T-cell (primary cell): ENCODE measurements at regions of chr5 and their contacts with region 1.

Region 1: DNA sequence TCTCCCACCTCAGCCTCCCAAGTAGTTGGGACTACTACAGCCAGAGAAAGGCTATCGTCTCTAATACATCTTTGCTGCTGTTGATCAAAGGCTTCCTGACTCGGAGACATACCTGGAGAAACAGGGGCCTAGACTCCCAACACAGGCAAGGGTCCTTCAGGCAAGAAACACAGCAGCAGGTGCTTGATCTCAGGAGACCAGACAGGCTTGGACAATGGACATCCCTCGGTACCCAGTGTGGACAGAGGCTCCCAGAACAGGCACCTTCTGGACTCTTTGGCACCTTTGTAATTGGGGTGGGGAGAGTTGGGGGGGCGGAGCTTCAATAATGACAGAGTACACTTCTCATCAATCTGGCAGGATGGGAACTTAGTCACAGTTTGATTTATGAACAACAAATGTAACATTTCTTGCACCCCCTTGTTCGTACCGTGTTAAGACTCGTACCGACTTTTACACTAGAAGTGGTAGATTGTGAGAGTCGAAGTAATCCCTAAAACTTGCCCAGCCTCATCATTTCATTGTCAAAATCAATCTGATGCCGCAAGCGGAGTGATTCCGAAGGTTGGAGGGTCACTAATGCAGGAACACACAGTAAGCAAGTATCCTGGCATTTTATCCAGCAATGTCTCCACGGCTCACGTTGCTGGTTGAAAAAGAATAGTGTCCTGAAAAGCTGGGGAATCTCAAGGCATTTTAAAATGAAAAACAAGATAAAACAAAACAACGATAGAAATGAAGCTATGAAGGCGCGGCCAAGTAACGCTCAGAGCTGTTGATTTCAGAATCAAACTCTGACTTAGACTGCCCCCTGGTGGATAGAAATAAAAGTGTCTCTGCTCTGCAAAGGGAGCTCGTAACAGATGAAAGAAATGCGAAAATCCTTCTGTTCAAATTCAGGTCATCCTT is 46.4 kb upstream of the STK32A start:
- DNase-seq: peak in 27 of 35 experiments; percentile 1 to 76 (median 21)
- ATAC-seq: peak; percentile 52 to 66 (median 60)
- H3K4me3 ChIP-seq: no peak overlapping the region
- H3K4me3 Mint-ChIP-seq: no peak overlapping the region
- H3K27ac ChIP-seq: no peak overlapping the region
- H3K27ac Mint-ChIP-seq: no peak overlapping the region
- H3K4me1 ChIP-seq: peaks cover 0 to 5% of the 10 kb centered on the region in 2 experiments
- H3K4me1 Mint-ChIP-seq: peaks cover 4 to 6% (median 6%) of the 10 kb centered on the region in 3 donors
- H3K27me3 ChIP-seq: peaks cover 0 to 3% of the 10 kb centered on the region in 2 experiments
- H3K27me3 Mint-ChIP-seq: peaks cover 3 to 6% of the 10 kb centered on the region in 2 donors

Region 2: GRCh38 chr5:146533260-146533857 is 655.1 kb before region 1 on chr5:
- CTCF ChIA-PET with region 1: interaction called, 13 to 45 read pairs
- POLR2A ChIA-PET with region 1: no interaction called
- DNase-seq: peak; percentile 42 to 83 (median 66)
- ATAC-seq: peak; percentile 80 to 86 (median 86)
- H3K4me3 ChIP-seq: no peak overlapping the region
- H3K4me3 Mint-ChIP-seq: no peak overlapping the region
- H3K27ac ChIP-seq: no peak overlapping the region
- H3K27ac Mint-ChIP-seq: no peak overlapping the region
- H3K4me1 ChIP-seq: peaks cover 0 to 3% of the 10 kb centered on the region in 2 experiments
- H3K4me1 Mint-ChIP-seq: peaks cover 4 to 8% (median 4%) of the 10 kb centered on the region in 3 donors
- H3K27me3 ChIP-seq: no peaks in the 10 kb centered on the region
- H3K27me3 Mint-ChIP-seq: no peaks in the 10 kb centered on the region

Region 3: DNA sequence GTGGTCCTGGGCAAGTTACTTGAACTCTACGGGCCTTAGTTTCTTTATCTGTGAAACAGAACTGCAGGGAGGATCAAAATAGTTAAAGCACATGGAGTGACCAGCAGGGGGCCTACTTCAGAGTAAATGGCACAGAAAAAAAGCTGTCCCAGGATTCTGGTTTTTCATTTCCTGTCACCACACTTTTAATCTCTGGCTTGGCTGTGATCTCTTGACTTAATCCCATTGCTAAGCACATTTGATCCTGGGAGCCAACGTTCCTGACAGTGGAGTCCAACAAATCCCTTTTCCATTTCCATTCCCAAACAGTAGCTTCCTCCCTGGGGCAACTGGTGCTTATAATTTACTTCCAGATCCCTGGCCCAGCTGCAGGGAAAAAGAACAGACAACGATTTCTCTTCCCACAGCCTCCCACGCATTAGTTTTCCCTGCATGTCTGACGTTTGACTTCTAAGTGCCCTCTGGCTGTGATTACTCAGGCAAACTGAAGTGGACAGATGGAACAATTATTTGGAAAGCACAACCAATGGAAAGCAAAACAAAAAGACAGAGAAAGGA is 90.1 kb before region 1 on chr5:
- CTCF ChIA-PET with region 1: interaction called, 3 to 15 read pairs
- POLR2A ChIA-PET with region 1: no interaction called
- DNase-seq: peak in 1 of 35 experiments; percentile 16
- ATAC-seq: no peak
- H3K4me3 ChIP-seq: no peak overlapping the region
- H3K4me3 Mint-ChIP-seq: no peak overlapping the region
- H3K27ac ChIP-seq: no peak overlapping the region
- H3K27ac Mint-ChIP-seq: no peak overlapping the region
- H3K4me1 ChIP-seq: no peaks in the 10 kb centered on the region
- H3K4me1 Mint-ChIP-seq: no peaks in the 10 kb centered on the region
- H3K27me3 ChIP-seq: no peaks in the 10 kb centered on the region
- H3K27me3 Mint-ChIP-seq: peaks cover 0 to under 1% of the 10 kb centered on the region in 2 donors